WTC11 (cell line): ENCODE measurements at regions of chr12 and their contacts with region 1.

Region 1: DNA sequence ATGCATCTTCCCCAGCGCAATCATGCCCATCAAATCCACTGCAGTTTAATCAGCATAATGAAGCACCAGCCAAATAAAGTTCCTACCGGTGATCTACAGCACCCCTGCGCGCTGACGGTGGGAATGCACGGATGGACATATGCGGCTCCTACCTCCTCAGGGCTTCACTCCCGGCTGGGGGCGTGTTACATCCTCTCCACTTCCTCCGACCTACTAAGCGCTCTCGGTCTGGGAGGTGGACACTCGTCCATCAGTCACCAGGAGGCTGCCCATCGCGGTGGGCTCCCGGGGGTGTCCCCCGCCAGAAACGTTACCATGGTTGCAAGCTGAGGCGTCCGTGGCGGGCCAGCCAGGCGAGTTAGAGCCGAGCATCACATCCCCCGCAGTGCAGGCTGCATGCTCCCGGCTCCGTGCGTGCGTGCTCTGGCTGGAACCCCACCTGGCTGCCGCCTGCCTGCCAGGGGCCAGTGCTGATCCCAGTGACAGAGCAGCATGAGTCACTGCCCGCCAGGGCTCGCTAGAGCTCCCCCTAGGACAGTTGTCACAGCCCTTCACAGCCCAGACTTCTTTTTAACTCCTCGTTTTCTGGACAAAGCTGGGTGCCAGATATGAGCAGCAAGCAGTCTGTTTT is 73.0 kb downstream of the CIT start:
- DNase-seq: peak; percentile 87
- ATAC-seq: peak; percentile 98
- H3K4me3 Mint-ChIP-seq: peak overlapping the region; percentile 53
- H3K27ac Mint-ChIP-seq: peak overlapping the region; percentile 74
- H3K4me1 Mint-ChIP-seq: peaks cover 28% of the 10 kb centered on the region
- H3K27me3 Mint-ChIP-seq: no peaks in the 10 kb centered on the region; the same call in 1 of the 2 replicates
- CTCF ChIP-seq: no peak

Region 2: DNA sequence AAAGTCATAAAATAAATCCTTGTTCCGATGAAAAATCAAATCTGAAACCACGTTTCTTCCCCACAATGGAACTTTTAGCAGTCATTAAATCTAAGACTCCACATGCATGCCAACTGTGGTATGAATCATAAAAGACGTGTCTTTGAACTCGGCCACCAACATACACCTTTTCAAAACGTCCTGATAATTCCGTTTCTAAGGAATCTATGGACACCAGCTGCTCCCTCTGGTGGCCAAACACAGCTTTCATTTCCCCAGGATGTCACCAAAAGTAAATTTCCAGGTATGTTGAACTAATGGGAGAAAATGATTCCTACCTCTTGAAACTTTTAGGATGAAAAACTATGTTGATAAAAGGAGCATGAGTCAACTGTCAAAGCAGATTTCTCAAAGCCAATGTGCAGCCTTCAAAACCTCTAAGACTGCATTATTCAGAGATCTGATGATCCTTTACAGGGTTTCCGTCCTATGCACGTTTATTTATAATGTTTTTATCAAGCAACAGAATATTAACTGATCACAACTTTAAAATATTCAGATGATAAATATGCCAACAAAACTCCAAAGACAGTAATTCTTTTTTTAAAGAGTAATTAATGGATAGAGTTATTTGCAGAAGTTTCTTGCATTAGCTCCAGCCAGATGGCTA is 23.2 kb before region 1 on chr12:
- CTCF ChIA-PET with region 1: interaction called, 42 read pairs
- POLR2A ChIA-PET with region 1: no interaction called
- DNase-seq: peak; percentile 37
- ATAC-seq: no peak
- H3K4me3 Mint-ChIP-seq: no peak overlapping the region
- H3K27ac Mint-ChIP-seq: peak overlapping the region; percentile 77; the same call in 1 of the 2 replicates
- H3K4me1 Mint-ChIP-seq: peaks cover 2% of the 10 kb centered on the region; the same call in 1 of the 2 replicates
- H3K27me3 Mint-ChIP-seq: no peaks in the 10 kb centered on the region
- CTCF ChIP-seq: peak; percentile 46; the same call in 1 of the 2 replicates

Region 3: DNA sequence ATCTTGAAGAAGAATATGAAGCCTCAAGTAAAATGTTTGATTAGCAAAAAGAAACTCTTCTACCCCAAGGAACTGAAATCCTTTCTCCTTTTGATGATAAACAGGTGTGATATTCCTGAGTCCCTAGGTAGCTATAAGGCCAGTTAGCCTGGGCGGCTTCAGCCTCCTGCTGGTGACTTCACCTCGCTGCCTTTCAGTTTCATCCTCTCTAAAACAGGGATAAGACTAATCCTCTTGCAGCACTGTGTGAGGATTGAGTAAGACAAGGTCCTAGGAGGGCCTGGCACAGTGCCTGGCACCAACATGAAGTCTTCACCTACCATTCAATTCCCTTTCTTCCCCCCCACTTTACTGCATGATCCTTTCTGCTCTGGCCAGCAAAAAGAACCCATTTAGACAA is 30.9 kb after region 1 on chr12:
- CTCF ChIA-PET with region 1: interaction called, 11 read pairs
- POLR2A ChIA-PET with region 1: no interaction called
- DNase-seq: peak; percentile 16
- ATAC-seq: peak; percentile 76
- H3K4me3 Mint-ChIP-seq: no peak overlapping the region
- H3K27ac Mint-ChIP-seq: no peak overlapping the region; the same call in 1 of the 2 replicates
- H3K4me1 Mint-ChIP-seq: no peaks in the 10 kb centered on the region
- H3K27me3 Mint-ChIP-seq: no peaks in the 10 kb centered on the region
- CTCF ChIP-seq: no peak

Region 4: GRCh38 chr12:119902084-119902509 is 98.0 kb after region 1 on chr12:
- CTCF ChIA-PET with region 1: interaction called, 13 read pairs
- POLR2A ChIA-PET with region 1: no interaction called
- DNase-seq: peak; percentile 81
- ATAC-seq: peak; percentile 99
- H3K4me3 Mint-ChIP-seq: no peak overlapping the region
- H3K27ac Mint-ChIP-seq: no peak overlapping the region
- H3K4me1 Mint-ChIP-seq: no peaks in the 10 kb centered on the region
- H3K27me3 Mint-ChIP-seq: no peaks in the 10 kb centered on the region
- CTCF ChIP-seq: peak; percentile 46; the same call in 1 of the 2 replicates